ENCODE measurements at regions of chr9 and their contacts with region 1.

Region 1: DNA sequence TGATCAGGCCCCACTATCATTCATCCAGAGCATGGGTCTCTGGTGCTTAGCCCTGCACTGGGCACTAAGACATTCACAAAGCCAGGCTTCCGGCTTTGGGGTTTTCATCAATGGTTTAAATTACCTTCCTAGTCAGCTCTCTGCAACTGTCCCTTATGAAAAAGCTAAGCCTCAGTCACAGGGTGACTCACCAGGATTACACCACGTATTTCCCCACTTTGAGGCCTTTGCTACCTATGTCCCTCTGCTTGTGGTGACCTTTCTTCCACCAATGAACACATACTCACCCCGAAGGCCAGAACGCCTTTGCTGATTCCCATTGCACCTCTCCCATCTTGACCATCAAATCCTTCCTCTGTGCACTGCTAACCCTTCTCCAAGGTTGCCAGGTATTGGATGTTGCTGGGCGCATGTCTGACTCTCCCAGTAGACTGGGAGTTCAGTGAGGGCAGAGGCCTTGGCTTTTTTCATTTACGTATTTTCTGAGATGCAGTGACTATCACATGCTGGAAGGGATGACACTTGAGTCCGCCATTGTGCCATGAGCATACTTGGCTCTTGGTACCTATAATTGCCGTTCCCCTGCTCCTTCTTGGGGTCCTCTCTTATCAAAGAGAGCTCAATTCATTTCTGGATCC is 58.7 kb upstream of the TNFSF8 start:
- DNase-seq: peak; percentile 74
- H3K4me3 Mint-ChIP-seq: peak overlapping the region; percentile 47
- H3K27ac Mint-ChIP-seq: peak overlapping the region; percentile 96
- H3K4me1 Mint-ChIP-seq: peaks cover 61% of the 10 kb centered on the region
- H3K27me3 Mint-ChIP-seq: no peaks in the 10 kb centered on the region

Region 2: DNA sequence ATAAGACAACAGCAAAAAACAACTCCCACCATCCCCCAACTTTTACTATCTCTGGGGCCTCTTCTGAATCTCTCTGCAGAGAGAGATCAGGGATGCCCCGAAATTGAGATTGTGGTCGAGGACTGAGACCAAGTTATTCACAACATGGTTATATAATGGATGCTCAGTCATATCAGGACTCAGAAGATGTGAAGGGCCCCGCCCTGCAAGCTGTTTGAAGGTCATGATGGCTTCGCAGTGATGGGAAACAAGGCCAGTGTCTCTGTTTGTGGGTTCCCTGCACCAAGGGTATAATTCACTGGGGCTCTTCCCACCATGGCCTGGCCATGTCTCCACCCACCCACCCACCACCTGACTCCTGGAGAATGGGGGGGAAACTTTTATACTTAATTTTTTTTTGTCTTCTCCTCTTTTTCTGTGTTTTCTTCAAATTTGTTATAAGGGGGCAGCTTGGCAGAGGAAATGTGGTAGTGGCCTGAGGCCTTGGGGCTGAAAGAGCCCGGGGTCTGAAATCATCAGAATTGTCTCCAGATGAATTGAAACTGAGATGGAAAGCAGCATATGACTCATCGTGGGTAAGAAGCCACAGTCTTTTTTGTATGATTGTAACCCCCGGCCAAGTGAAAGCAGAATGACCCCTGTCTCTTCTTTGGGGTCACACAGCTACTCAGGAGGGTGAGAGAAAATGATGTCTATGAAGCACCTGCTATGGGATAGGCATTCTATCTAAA is 292.1 kb before region 1 on chr9:
- CTCF ChIA-PET with region 1: no interaction called
- intact Hi-C with region 1: loop called (anchors 1 kb)
- DNase-seq: peak; percentile 89
- H3K4me3 Mint-ChIP-seq: peak overlapping the region; percentile 54
- H3K27ac Mint-ChIP-seq: peak overlapping the region; percentile 98
- H3K4me1 Mint-ChIP-seq: peaks cover 74% of the 10 kb centered on the region
- H3K27me3 Mint-ChIP-seq: no peaks in the 10 kb centered on the region

Region 3: GRCh38 chr9:114906908-114907571 is 82.0 kb before region 1 on chr9:
- CTCF ChIA-PET with region 1: interaction called, 5 read pairs
- intact Hi-C with region 1: loop called (anchors 1 kb)
- DNase-seq: peak; percentile 46
- H3K4me3 Mint-ChIP-seq: no peak overlapping the region
- H3K27ac Mint-ChIP-seq: peak overlapping the region; percentile 98
- H3K4me1 Mint-ChIP-seq: peaks cover 54% of the 10 kb centered on the region
- H3K27me3 Mint-ChIP-seq: no peaks in the 10 kb centered on the region

Region 4: GRCh38 chr9:114953917-114954316 is 35.2 kb before region 1 on chr9:
- CTCF ChIA-PET with region 1: interaction called, 3 read pairs
- intact Hi-C with region 1: loop called (anchors 1 kb)
- DNase-seq: peak; percentile 62
- H3K4me3 Mint-ChIP-seq: no peak overlapping the region
- H3K27ac Mint-ChIP-seq: peak overlapping the region; percentile 8
- H3K4me1 Mint-ChIP-seq: peaks cover 33% of the 10 kb centered on the region
- H3K27me3 Mint-ChIP-seq: no peaks in the 10 kb centered on the region

Region 5: DNA sequence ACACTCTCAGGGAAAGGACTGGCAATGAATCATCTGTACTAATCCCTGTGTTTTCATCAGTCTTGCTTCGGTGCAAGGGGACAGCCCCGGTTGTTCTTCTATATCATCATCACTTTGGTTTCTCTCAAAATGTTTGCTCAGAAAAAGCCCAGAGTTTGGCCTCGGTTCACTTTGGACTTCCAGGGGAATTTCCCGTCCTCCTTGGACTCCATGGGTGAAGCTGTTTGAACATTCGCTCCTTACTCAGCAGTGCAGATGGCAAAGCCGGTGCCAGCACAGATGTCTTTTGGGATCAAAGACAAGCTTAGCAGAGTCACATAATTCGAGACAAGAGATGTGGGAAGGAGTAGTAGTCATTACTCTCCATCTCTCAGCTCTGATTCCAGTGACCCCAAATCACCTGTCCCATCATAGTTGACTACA is 11.1 kb after region 1 on chr9:
- CTCF ChIA-PET with region 1: interaction called, 5 read pairs
- intact Hi-C with region 1: loop called (anchors 1 kb)
- DNase-seq: peak; percentile 68
- H3K4me3 Mint-ChIP-seq: peak overlapping the region; percentile 66
- H3K27ac Mint-ChIP-seq: peak overlapping the region; percentile 83
- H3K4me1 Mint-ChIP-seq: peaks cover 51% of the 10 kb centered on the region
- H3K27me3 Mint-ChIP-seq: no peaks in the 10 kb centered on the region

Measured in activated naive CD4-positive, alpha-beta T cell treated with anti-CD3 and anti-CD28 coated beads for 36 hours (primary cell).